WTC11 (cell line): ENCODE measurements at regions of chr17 and their contacts with region 1.

Region 1: GRCh38 chr17:62653002-62653825 is 25.7 kb downstream of the MRC2 start:
- DNase-seq: peak; percentile 85
- ATAC-seq: peak; percentile 75
- H3K4me3 Mint-ChIP-seq: peak overlapping the region; percentile 85
- H3K27ac Mint-ChIP-seq: peak overlapping the region; percentile 63; the same call in 1 of the 2 replicates
- H3K4me1 Mint-ChIP-seq: peaks cover 39% of the 10 kb centered on the region
- H3K27me3 Mint-ChIP-seq: peaks cover 10% of the 10 kb centered on the region
- CTCF ChIP-seq: no peak

Region 2: DNA sequence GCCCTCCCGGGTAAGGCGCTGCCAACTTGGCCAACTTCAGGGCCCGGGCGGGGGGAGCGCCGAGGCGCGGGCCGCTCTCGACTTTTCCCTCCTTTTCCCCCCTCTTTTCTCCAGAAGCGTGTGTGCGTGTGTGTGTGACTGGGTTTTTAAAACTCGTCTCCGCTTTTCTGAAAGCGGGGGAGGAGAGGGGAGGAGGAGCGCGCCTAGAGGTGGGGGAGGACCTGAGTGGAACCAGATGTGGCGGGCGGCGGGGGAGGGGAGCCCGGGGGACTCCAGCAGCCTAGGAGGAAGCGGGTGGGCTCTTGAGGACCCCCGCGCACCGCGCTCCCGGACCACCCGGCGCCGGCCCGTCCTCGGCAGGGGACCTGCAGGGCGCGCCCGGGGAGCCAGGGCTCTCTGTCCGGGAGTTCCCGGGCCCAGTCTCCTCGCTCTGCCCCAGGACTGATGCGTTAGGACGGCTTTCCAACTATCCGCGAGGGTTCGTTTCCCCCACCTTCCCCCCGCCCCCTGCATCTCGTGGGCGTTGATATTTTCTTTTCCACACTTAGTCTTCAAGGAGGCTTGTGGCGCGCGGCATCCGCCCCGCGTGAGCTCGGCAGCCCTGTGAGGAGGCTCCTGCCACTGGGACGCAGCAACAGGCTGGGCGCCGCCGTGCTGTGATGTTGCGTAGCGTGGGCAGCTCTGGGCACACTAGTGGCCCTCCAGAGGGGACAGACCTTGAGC is 25.1 kb before region 1 on chr17:
- CTCF ChIA-PET with region 1: no interaction called
- POLR2A ChIA-PET with region 1: interaction called, 15 read pairs
- DNase-seq: no peak
- ATAC-seq: no peak
- H3K4me3 Mint-ChIP-seq: peak overlapping the region; percentile 89
- H3K27ac Mint-ChIP-seq: no peak overlapping the region
- H3K4me1 Mint-ChIP-seq: peaks cover 46% of the 10 kb centered on the region
- H3K27me3 Mint-ChIP-seq: peaks cover 7% of the 10 kb centered on the region; the same call in 1 of the 2 replicates
- CTCF ChIP-seq: no peak

Region 3: DNA sequence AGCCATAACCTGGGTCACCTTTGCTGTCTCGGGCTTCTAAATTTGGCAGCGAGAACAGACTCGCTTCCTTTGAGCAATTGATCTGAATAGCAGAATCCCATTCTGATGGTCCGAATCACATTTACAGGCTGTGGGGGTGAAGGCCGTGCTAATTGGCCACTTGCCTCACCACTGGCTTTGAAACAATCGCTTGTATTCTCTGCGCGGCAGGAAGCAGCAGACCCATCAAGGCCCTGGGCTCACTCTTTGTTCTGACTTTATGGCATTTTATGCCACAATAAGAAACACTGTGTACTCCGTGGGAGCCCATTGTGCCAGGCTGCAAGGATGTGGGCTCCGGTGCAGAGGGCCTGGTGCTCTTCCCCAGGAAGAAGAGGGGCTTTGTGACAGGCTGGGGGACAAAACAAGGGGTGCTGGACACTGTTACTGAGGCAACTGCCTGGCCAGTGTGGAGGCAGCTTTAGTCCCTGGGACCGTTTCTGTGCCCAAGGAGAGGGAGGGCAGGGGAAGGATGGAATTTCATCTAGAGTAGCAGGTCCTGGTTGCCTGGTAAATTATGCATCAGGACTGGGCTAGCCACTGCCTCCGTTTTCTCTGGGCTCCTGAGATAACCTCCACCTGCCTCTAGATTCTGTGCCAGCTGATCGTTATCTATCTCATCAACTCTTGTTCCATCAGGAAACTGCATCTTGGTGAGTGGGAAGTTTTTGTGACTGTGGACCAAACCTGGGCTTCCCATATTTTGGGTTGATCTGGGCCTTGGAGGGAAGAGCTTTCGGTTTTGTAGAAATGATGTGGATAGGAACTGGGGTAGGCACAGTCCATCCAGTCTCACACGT is 52.8 kb after region 1 on chr17:
- CTCF ChIA-PET with region 1: no interaction called
- POLR2A ChIA-PET with region 1: no interaction called
- DNase-seq: no peak
- ATAC-seq: peak; percentile 57
- H3K4me3 Mint-ChIP-seq: peak overlapping the region; percentile 80
- H3K27ac Mint-ChIP-seq: peak overlapping the region; percentile 89
- H3K4me1 Mint-ChIP-seq: peaks cover 30% of the 10 kb centered on the region
- H3K27me3 Mint-ChIP-seq: peaks cover 15% of the 10 kb centered on the region
- CTCF ChIP-seq: no peak